CD14-positive monocyte (primary cell): ENCODE measurements at regions of chr6 and their contacts with region 1.

Region 1: GRCh38 chr6:53171605-53172446 is 23.2 kb upstream of the GCM1 start:
- DNase-seq: peak; percentile 84 to 88 (median 86)
- H3K4me3 ChIP-seq: no peak overlapping the region
- H3K4me3 Mint-ChIP-seq: no peak overlapping the region
- H3K27ac ChIP-seq: no peak overlapping the region
- H3K27ac Mint-ChIP-seq: peak overlapping the region in 2 of 7 donors; percentile 52 to 74
- H3K4me1 ChIP-seq: no peaks in the 10 kb centered on the region
- H3K4me1 Mint-ChIP-seq: peaks cover 9% of the 10 kb centered on the region
- H3K27me3 ChIP-seq: no peaks in the 10 kb centered on the region
- H3K27me3 Mint-ChIP-seq: peaks cover 0 to 2% (median 0%) of the 10 kb centered on the region in 3 donors
- CTCF ChIP-seq: peak; percentile 100

Region 2: GRCh38 chr6:53484476-53485280 is 312.9 kb after region 1 on chr6:
- intact Hi-C with region 1: loop called (anchors 1 to 2 kb)
- DNase-seq: peak; percentile 60 to 77 (median 68)
- H3K4me3 ChIP-seq: no peak overlapping the region
- H3K4me3 Mint-ChIP-seq: peak overlapping the region in 1 of 2 donors; percentile 67
- H3K27ac ChIP-seq: no peak overlapping the region
- H3K27ac Mint-ChIP-seq: no peak overlapping the region
- H3K4me1 ChIP-seq: peaks cover 31 to 37% of the 10 kb centered on the region in 2 donors
- H3K4me1 Mint-ChIP-seq: peaks cover 40% of the 10 kb centered on the region
- H3K27me3 ChIP-seq: peaks cover 0 to 3% of the 10 kb centered on the region in 2 donors
- H3K27me3 Mint-ChIP-seq: peaks cover 3 to 13% (median 9%) of the 10 kb centered on the region in 3 donors
- CTCF ChIP-seq: peak; percentile 97

Region 3: DNA sequence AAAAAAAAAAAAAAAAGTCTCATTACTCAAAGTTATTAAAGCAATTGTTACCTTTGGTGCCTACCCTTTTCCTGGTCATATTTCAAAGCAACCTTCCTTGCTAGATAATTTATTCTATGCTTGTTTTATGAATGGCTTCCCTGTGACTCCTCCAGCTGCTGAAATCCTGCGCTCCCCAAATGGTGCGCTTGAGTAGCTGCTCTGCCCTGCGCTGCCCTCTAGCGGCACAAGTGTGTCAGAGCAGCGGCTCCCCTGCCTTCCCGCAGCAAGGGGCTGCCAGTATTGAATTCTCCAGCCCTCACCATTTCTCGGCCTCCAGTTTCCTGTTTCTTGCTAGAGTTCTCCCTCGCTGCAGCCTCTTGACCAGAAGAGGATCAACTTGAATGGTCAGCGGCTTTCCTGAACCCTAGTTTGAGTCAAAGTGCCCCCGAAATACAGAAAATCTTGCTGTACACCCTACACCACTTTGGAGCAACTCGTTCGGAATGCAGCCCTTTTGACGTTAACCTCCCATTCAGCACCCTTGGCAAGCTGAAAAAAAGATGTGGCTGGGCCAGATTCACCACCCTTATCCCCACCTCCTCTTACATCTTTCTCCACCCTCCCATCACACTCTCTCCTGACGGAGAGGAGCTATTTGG is 554.1 kb after region 1 on chr6:
- intact Hi-C with region 1: loop called (anchors 10 kb)
- DNase-seq: peak; percentile 56 to 69 (median 64)
- H3K4me3 ChIP-seq: no peak overlapping the region
- H3K4me3 Mint-ChIP-seq: no peak overlapping the region
- H3K27ac ChIP-seq: no peak overlapping the region
- H3K27ac Mint-ChIP-seq: peak overlapping the region in 1 of 7 donors; percentile 80
- H3K4me1 ChIP-seq: peaks cover 4 to 5% of the 10 kb centered on the region in 2 donors
- H3K4me1 Mint-ChIP-seq: peaks cover 15% of the 10 kb centered on the region
- H3K27me3 ChIP-seq: no peaks in the 10 kb centered on the region
- H3K27me3 Mint-ChIP-seq: peaks cover 3 to 9% (median 3%) of the 10 kb centered on the region in 3 donors
- CTCF ChIP-seq: peak; percentile 97